ENCODE measurements at regions of chr14 and their contacts with region 1.

Region 1: DNA sequence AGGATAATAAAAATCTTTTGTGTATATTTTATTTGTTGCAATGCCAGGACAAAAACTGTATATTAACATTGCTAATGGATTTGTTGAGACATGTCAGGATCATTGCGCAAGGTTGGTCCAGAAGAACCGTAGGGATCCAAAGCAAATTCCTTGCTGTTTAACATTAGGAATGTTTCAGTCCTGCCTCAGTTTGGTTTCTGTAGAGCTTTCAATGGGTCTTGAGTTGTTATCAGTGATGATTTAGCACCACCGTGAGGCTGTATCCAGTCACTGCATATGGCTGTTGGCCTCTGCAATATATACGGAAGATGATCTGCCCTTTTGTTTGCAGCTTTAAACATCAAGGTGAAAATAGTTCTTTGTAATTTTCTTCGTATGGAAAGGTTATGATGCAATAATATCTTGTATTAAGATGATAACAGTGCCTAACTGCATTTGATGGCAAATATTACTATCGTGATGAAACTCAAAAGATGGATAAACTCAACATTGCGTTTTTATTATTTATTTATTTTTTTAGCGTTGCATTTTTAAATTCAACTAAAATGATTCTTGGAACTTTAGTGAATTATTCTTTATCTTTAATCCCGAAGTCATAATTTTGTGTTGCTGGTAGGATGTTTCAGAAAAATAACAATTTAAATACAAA is 231.2 kb downstream of the AKAP6 start:
- DNase-seq: peak; percentile 54 to 71 (median 70)
- H3K4me3 ChIP-seq: no peak overlapping the region
- H3K27ac ChIP-seq: no peak overlapping the region
- H3K4me1 ChIP-seq: peaks cover 0 to 15% (median 11%) of the 10 kb centered on the region in 4 experiments
- H3K27me3 ChIP-seq: no peaks in the 10 kb centered on the region

Region 2: GRCh38 chr14:32531942-32532515 is 28.3 kb before region 1 on chr14:
- CTCF ChIA-PET with region 1: no interaction called
- POLR2A ChIA-PET with region 1: no interaction called
- DNase-seq: no peak
- H3K4me3 ChIP-seq: no peak overlapping the region
- H3K27ac ChIP-seq: no peak overlapping the region
- H3K4me1 ChIP-seq: no peaks in the 10 kb centered on the region
- H3K27me3 ChIP-seq: no peaks in the 10 kb centered on the region

Region 3: GRCh38 chr14:32545095-32545494 is 15.2 kb before region 1 on chr14:
- CTCF ChIA-PET with region 1: interaction called, 11 read pairs
- POLR2A ChIA-PET with region 1: no interaction called
- DNase-seq: no peak
- H3K4me3 ChIP-seq: no peak overlapping the region
- H3K27ac ChIP-seq: no peak overlapping the region
- H3K4me1 ChIP-seq: peaks cover 0 to 3% (median 0%) of the 10 kb centered on the region in 4 experiments
- H3K27me3 ChIP-seq: no peaks in the 10 kb centered on the region